ENCODE measurements at regions of chr10 and their contacts with region 1.

Region 1: DNA sequence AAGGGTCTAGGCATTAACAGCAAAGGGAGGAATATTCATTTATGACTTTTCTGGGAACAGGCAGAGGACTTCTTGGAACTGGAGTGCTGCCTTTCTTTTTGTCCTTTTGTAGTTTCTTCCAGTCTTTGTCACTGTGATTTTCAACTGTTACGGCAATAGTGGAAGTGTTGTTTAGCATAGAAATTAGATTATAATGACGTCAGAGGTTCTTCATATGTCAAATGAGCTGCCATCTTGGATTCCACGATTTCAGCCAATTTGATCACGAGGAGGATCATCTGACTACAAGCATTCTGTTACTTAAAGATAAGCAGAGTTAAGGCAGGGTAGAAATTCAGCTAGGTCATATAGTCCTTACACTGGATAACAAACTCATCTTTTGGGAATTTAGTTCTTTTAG is 238.9 kb downstream of the NEBL start:
- DNase-seq: no peak
- ATAC-seq: no peak
- H3K4me3 Mint-ChIP-seq: no peak overlapping the region
- H3K27ac Mint-ChIP-seq: no peak overlapping the region
- H3K4me1 Mint-ChIP-seq: no peaks in the 10 kb centered on the region
- H3K27me3 Mint-ChIP-seq: no peaks in the 10 kb centered on the region

Region 2: DNA sequence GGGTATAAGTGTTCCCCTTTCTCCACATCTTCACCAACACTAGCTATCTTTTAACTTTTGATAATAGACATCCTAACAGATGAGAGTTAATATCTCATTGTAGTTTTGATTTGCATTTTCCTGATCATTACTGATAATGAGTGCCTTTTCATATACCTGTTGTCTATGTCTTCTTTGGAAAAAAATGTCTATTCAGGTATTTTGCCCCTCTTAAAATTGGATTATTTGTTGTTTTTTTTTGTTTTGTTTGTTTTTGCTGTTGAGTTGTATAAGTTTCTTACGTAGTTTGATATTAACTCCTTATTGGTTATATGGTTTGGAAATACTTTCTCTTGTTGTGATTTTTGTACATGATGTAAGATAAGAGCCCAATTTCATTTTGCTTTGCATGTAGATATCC is 1394.9 kb before region 1 on chr10:
- CTCF ChIA-PET with region 1: no interaction called
- POLR2A ChIA-PET with region 1: no interaction called
- intact Hi-C with region 1: no loop called
- DNase-seq: no peak
- ATAC-seq: no peak
- H3K4me3 Mint-ChIP-seq: no peak overlapping the region
- H3K27ac Mint-ChIP-seq: no peak overlapping the region
- H3K4me1 Mint-ChIP-seq: no peaks in the 10 kb centered on the region
- H3K27me3 Mint-ChIP-seq: no peaks in the 10 kb centered on the region

Region 3: GRCh38 chr10:20618011-20618547 is 40.1 kb before region 1 on chr10:
- CTCF ChIA-PET with region 1: no interaction called
- POLR2A ChIA-PET with region 1: no interaction called
- intact Hi-C with region 1: loop called in 1 of 2 experiments (anchors 1 kb)
- DNase-seq: no peak
- ATAC-seq: no peak
- H3K4me3 Mint-ChIP-seq: no peak overlapping the region
- H3K27ac Mint-ChIP-seq: no peak overlapping the region
- H3K4me1 Mint-ChIP-seq: peaks cover 4% of the 10 kb centered on the region
- H3K27me3 Mint-ChIP-seq: no peaks in the 10 kb centered on the region

Region 4: DNA sequence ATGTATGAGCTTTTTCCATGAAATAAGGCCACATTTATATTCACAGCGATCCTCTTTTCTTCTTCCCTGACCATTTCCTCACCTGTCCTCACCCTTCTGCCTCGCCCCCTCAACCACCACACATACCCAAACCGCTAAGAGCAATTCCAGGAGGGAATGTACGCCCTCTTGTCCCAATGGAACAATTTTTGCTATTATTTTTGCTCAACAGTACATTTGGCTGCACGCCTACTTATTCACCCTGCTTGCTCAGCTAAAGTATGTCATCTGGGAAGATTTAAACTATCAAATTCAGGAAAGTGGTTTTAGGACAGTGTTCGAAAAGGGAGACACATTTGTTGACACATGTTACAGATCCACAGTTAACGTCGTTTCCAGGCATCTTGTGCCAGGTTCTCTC is 13.7 kb before region 1 on chr10:
- CTCF ChIA-PET with region 1: no interaction called
- POLR2A ChIA-PET with region 1: no interaction called
- intact Hi-C with region 1: no loop called
- DNase-seq: no peak
- ATAC-seq: no peak
- H3K4me3 Mint-ChIP-seq: no peak overlapping the region
- H3K27ac Mint-ChIP-seq: no peak overlapping the region
- H3K4me1 Mint-ChIP-seq: no peaks in the 10 kb centered on the region
- H3K27me3 Mint-ChIP-seq: peaks cover 2% of the 10 kb centered on the region

Region 5: DNA sequence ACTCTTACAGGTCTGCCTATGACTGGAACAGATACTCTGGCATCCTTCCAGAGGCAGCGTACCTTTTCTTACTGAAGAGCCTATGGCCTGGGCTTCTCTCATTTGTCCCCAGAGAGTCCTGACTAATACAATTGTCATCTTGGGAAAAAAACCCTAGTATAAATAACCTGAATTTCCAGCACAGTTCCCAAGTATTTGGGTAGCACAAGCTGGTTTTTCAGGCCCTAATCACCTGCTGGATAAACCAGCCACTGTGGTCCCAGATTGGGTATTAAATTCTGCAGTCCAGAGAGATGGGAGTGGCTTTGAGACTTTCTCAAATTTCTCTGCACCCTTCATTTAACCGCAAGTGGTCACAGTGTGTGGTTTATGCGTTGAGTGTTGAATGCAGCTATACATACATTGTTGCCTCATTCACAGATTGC is 425.7 kb after region 1 on chr10:
- CTCF ChIA-PET with region 1: no interaction called
- POLR2A ChIA-PET with region 1: no interaction called
- intact Hi-C with region 1: no loop called
- DNase-seq: no peak
- ATAC-seq: no peak
- H3K4me3 Mint-ChIP-seq: no peak overlapping the region
- H3K27ac Mint-ChIP-seq: no peak overlapping the region
- H3K4me1 Mint-ChIP-seq: no peaks in the 10 kb centered on the region
- H3K27me3 Mint-ChIP-seq: peaks cover 5% of the 10 kb centered on the region

Region 6: DNA sequence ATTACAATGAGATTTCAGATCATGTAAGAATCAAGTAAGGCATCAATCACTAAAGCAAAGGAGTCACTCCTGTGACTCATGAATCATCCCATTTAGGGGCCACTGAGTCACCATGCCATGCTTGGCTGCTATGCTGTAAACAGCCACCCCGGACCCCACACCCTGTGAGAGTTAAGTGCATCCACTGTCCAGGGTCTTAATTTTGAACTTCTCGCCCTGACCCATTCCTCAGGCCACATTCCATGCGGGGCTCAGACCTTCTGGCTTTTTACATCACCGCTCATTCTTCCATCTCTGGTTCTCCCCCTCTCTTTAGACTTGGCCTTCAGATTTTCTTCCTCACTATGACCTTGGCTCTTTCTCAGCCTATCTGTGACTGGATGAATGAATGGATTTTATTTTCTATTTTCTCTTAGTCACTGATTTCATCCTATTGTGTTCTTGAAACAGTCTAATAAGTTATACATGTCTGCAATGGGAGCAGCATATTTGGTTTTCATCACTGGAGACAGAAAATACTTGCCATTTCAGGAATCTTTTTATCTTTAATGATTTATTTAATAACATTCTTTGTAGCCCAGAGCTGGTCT is 627.7 kb after region 1 on chr10:
- CTCF ChIA-PET with region 1: no interaction called
- POLR2A ChIA-PET with region 1: no interaction called
- intact Hi-C with region 1: no loop called
- DNase-seq: no peak
- ATAC-seq: no peak
- H3K4me3 Mint-ChIP-seq: no peak overlapping the region
- H3K27ac Mint-ChIP-seq: no peak overlapping the region
- H3K4me1 Mint-ChIP-seq: no peaks in the 10 kb centered on the region
- H3K27me3 Mint-ChIP-seq: peaks cover 3% of the 10 kb centered on the region

Measured in activated CD4-positive, alpha-beta T cell treated with anti-CD3 and anti-CD28 coated beads for 36 hours (primary cell).